ENCODE measurements at regions of chr10 and their contacts with region 1.

Region 1: DNA sequence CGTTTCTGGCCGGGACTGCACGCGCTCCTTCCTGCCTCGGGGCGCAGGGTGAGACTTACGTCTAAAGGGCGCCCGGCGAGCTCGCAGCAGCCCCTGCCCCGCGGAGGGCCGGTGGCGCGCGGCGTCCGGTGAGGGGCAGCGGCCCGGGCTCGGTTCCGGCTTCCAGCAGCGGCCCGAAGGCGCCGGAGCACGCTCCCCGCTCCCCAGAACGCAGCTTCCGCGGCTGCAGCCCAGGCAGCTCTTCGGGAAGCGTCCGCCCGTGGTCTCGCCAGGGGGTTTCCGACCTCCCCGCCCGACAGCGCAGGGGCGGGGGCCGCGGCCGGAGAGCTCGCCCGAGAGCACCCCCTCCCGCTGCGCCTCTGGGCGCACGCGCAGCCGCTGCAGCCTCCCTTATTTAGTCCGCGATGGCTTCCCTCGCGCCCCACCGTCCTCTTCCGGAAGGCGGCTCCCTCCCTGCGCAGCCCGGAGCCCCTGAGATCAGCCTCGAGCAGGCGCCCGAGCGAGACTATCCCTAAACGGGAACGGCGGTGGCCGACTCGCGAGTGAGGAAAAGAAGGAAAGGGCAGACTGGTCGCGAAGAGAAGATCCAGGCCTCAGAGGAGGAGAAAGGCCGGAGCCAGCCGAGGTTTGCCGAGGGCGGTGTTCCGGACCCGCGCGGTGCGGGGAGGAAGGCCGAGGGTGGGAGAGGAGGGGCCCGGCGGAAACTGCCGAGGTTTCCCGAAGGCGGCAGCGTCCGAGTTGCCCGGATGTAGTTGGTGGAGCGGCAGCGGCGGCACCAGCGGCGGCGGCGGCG is at the start of gene WAC:
- DNase-seq: peak; percentile 98
- H3K4me3 Mint-ChIP-seq: peak within 1 kb of the TSS; percentile 99
- H3K27ac Mint-ChIP-seq: peak within 1 kb of the TSS; percentile 100
- H3K4me1 Mint-ChIP-seq: peaks cover 51% of the 10 kb centered on the region
- H3K27me3 Mint-ChIP-seq: no peaks in the 10 kb centered on the region
- total RNA-seq, gene WAC: 77.1 to 82.9 TPM

Region 2: DNA sequence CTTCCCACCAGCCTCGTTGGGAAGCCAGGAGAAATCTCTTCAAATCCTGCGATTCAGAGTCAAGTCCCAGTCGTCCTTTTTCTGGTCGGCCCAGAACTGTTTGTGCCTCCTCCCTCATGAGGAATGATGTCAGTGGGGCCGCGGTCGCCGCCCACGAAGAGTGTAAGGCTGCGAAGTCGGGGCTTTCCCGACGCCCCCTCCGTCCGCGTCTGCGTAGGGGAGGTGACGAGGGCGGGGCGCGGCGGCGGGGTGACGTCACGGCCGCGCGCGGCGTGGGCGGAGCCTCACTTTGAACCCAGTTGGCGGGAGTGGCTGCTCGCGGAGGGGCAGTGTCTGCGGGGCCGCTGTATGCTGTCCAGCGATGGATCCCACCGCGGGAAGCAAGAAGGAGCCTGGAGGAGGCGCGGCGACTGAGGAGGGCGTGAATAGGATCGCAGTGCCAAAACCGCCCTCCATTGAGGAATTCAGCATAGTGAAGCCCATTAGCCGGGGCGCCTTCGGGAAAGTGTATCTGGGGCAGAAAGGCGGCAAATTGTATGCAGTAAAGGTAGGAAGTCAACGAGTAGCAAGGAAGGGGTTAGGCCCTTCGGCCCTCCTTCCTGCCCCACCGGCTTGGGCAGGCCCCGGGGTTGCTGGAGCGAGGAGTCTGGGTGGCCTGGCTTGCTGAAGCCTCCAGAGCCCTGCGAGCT is 1377.4 kb before region 1 on chr10 and contains the start of gene MASTL:
- CTCF ChIA-PET with region 1: no interaction called
- intact Hi-C with region 1: loop called (anchors 2 kb)
- DNase-seq: peak; percentile 95
- H3K4me3 Mint-ChIP-seq: peak within 1 kb of the TSS; percentile 94
- H3K27ac Mint-ChIP-seq: peak within 1 kb of the TSS; percentile 100
- H3K4me1 Mint-ChIP-seq: peaks cover 46% of the 10 kb centered on the region
- H3K27me3 Mint-ChIP-seq: no peaks in the 10 kb centered on the region
- total RNA-seq, gene MASTL: 50.7 to 51.3 TPM

Region 3: GRCh38 chr10:27742195-27743011 is 790.2 kb before region 1 on chr10:
- CTCF ChIA-PET with region 1: no interaction called
- intact Hi-C with region 1: loop called (anchors 2 kb)
- DNase-seq: peak; percentile 88
- H3K4me3 Mint-ChIP-seq: peak overlapping the region; percentile 68
- H3K27ac Mint-ChIP-seq: no peak overlapping the region
- H3K4me1 Mint-ChIP-seq: peaks cover 31% of the 10 kb centered on the region
- H3K27me3 Mint-ChIP-seq: peaks cover 49% of the 10 kb centered on the region

Region 4: DNA sequence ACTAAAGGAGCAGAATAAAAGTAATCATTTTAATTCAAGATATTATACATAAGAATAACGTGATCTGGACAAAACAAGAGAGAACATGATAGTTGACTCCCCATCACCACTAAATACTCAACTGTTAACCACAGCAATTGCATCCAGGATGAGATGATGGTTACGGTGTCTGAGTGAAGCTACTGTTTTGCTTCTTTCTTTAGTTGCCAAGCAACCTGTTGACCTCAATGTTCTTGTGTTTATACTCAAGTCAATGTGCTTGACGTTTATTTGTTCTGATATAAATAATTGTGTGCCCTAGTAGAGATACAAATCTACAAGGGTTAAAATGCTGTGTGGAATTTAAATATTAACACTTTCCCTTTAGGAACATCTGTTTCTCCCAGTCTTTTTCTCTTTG is 198.3 kb before region 1 on chr10:
- CTCF ChIA-PET with region 1: no interaction called
- intact Hi-C with region 1: loop called (anchors 2 kb)
- DNase-seq: peak; percentile 61
- H3K4me3 Mint-ChIP-seq: peak overlapping the region; percentile 67
- H3K27ac Mint-ChIP-seq: peak overlapping the region; percentile 96
- H3K4me1 Mint-ChIP-seq: peaks cover 76% of the 10 kb centered on the region
- H3K27me3 Mint-ChIP-seq: no peaks in the 10 kb centered on the region

Region 5: DNA sequence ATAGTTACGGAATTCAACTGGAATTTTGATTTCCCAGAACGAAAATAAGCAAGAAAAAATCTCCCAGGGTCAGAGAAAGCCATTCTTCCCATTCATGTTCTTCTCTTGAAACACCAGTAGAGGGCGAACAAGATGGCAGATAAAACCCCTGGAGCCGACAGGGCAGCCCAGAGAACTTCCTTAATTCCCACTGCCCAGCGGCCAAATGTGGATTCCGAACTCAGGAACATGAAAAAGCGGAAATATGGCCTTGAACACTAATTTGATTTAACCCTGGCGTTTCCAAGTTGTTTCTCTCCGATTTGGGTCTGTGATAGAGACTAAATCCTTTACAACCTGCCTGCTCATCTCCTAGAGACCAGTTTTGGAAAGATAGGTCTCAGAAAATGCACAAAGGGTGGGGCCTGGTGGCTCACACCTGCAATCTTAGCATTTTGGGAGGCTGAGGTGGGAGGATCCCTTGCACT is 100.3 kb before region 1 on chr10:
- CTCF ChIA-PET with region 1: no interaction called
- intact Hi-C with region 1: loop called (anchors 1 kb)
- DNase-seq: peak; percentile 29
- H3K4me3 Mint-ChIP-seq: peak overlapping the region; percentile 48
- H3K27ac Mint-ChIP-seq: no peak overlapping the region
- H3K4me1 Mint-ChIP-seq: no peaks in the 10 kb centered on the region
- H3K27me3 Mint-ChIP-seq: no peaks in the 10 kb centered on the region

Region 6: DNA sequence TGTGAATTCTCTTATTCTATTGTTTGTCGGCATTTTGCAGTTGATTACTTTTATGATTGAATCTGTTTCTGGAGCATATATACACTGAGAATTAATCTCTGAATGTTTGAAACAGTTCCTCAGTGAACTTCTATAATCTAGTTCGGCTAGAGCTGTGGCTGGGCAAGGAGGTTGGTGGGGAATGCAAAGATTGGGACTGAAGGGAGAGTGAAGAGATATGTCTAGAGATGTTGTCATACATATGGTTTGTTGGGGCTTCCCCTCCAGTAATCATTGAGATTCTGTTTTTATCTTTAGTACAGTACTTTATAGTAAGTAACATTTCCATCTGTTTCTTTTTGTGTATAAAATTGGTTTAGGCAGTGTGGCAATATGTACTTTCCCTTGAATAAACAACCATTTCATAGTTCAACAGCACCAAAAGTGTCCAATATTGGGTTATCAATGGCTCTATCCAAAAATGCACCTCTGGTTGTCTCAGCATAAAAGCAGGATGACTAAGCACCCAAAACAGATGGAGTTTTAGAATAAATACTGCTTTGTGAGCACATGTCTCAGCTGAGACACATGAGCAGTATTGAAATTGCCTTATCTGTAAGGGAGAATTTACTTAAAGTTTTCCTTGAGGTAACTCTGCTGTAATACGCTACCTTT is 37.1 kb after region 1 on chr10:
- CTCF ChIA-PET with region 1: no interaction called
- intact Hi-C with region 1: loop called (anchors 2 kb)
- DNase-seq: no peak
- H3K4me3 Mint-ChIP-seq: no peak overlapping the region
- H3K27ac Mint-ChIP-seq: peak overlapping the region; percentile 7
- H3K4me1 Mint-ChIP-seq: peaks cover 80% of the 10 kb centered on the region
- H3K27me3 Mint-ChIP-seq: no peaks in the 10 kb centered on the region

Region 7: GRCh38 chr10:28676968-28677887 is 144.6 kb after region 1 on chr10 and contains the start of gene BAMBI:
- CTCF ChIA-PET with region 1: interaction called, 4 read pairs
- intact Hi-C with region 1: loop called (anchors 1 kb)
- DNase-seq: peak; percentile 91
- H3K4me3 Mint-ChIP-seq: peak within 1 kb of the TSS; percentile 73
- H3K27ac Mint-ChIP-seq: no peak within 1 kb of the TSS
- H3K4me1 Mint-ChIP-seq: peaks cover 23% of the 10 kb centered on the region
- H3K27me3 Mint-ChIP-seq: peaks cover 53% of the 10 kb centered on the region
- total RNA-seq, gene BAMBI: 0.57 to 0.59 TPM

Region 8: GRCh38 chr10:28810057-28810870 is 277.7 kb after region 1 on chr10:
- CTCF ChIA-PET with region 1: no interaction called
- intact Hi-C with region 1: no loop called
- DNase-seq: no peak
- H3K4me3 Mint-ChIP-seq: no peak overlapping the region
- H3K27ac Mint-ChIP-seq: no peak overlapping the region
- H3K4me1 Mint-ChIP-seq: peaks cover 4% of the 10 kb centered on the region
- H3K27me3 Mint-ChIP-seq: peaks cover 36% of the 10 kb centered on the region

Measured in activated naive CD4-positive, alpha-beta T cell treated with anti-CD3 and anti-CD28 coated beads for 36 hours (primary cell).